PC-9 (cell line): ENCODE measurements at regions of chr10 and their contacts with region 1.

Region 1: GRCh38 chr10:35493196-35494118 is 111.7 kb upstream of the GJD4 start:
- DNase-seq: peak; percentile 45 to 49
- H3K4me3 ChIP-seq: no peak overlapping the region
- H3K27ac ChIP-seq: no peak overlapping the region
- H3K4me1 ChIP-seq: peaks cover 29% of the 10 kb centered on the region
- H3K27me3 ChIP-seq: no peaks in the 10 kb centered on the region
- CTCF ChIP-seq: no peak

Region 2: GRCh38 chr10:35059481-35059880 is 434.0 kb before region 1 on chr10:
- CTCF ChIA-PET with region 1: no interaction called
- POLR2A ChIA-PET with region 1: no interaction called
- intact Hi-C with region 1: no loop called
- DNase-seq: no peak
- H3K4me3 ChIP-seq: no peak overlapping the region
- H3K27ac ChIP-seq: no peak overlapping the region
- H3K4me1 ChIP-seq: peaks cover 18% of the 10 kb centered on the region
- H3K27me3 ChIP-seq: no peaks in the 10 kb centered on the region
- CTCF ChIP-seq: no peak

Region 3: DNA sequence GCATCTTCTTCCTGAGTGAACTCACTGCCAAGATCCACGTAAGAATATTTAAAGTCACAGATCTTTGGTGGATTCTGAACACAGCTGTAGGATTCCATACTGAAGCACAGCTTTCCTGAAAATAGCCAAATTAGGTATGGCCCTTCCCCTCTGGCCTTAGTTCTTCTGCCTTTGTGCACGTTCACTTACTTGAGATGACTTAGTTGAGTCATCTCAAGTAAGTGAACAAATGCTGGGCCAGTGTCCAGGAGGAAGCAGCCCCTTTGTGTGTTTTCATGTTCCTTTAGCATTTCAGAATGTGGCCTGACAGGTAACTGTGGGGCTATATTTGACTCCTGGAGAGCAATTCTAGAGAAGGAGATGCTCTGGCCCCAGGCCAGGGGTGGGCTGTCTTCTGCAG is 105.7 kb before region 1 on chr10:
- CTCF ChIA-PET with region 1: interaction called, 12 read pairs
- POLR2A ChIA-PET with region 1: no interaction called
- intact Hi-C with region 1: no loop called
- DNase-seq: peak; percentile 59 to 62
- H3K4me3 ChIP-seq: no peak overlapping the region
- H3K27ac ChIP-seq: no peak overlapping the region
- H3K4me1 ChIP-seq: peaks cover 4% of the 10 kb centered on the region; the same call in 1 of the 2 replicates
- H3K27me3 ChIP-seq: no peaks in the 10 kb centered on the region
- CTCF ChIP-seq: no peak

Region 4: DNA sequence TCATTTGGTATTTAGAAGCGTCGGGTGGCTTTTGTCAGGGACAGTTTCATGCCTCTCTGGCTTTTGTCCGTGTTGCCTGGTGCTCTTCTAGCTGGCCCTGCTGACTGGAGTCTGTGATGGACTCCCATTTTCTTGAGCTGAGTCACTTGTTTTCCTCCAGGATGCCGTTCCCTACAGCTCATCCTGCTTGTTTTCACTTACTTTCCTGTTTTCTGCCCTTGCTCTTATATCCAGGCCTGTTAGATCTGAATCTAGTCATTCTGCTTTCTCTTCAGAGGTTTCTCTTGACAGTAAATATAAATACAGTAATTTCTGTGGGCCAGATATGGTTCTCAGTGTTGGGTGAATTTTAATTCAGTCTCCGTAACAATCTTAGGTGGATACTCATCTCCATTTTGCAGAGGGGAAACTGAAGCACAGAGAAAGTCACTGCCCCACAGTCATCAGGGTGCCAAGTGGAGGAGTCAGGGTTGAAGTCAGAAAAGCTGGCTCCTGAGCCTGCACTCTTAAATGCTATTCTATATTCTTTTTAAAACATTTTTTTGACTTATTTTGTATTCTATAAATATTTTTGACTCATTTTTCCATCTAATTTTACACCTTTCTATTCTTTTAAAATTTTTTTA is 71.8 kb before region 1 on chr10:
- CTCF ChIA-PET with region 1: no interaction called
- POLR2A ChIA-PET with region 1: interaction called, 7 read pairs
- intact Hi-C with region 1: loop called (anchors 2 kb)
- DNase-seq: peak; percentile 53 to 78
- H3K4me3 ChIP-seq: no peak overlapping the region; the same call in 1 of the 2 replicates
- H3K27ac ChIP-seq: peak overlapping the region; percentile 80
- H3K4me1 ChIP-seq: peaks cover 46% of the 10 kb centered on the region
- H3K27me3 ChIP-seq: no peaks in the 10 kb centered on the region
- CTCF ChIP-seq: no peak

Region 5: DNA sequence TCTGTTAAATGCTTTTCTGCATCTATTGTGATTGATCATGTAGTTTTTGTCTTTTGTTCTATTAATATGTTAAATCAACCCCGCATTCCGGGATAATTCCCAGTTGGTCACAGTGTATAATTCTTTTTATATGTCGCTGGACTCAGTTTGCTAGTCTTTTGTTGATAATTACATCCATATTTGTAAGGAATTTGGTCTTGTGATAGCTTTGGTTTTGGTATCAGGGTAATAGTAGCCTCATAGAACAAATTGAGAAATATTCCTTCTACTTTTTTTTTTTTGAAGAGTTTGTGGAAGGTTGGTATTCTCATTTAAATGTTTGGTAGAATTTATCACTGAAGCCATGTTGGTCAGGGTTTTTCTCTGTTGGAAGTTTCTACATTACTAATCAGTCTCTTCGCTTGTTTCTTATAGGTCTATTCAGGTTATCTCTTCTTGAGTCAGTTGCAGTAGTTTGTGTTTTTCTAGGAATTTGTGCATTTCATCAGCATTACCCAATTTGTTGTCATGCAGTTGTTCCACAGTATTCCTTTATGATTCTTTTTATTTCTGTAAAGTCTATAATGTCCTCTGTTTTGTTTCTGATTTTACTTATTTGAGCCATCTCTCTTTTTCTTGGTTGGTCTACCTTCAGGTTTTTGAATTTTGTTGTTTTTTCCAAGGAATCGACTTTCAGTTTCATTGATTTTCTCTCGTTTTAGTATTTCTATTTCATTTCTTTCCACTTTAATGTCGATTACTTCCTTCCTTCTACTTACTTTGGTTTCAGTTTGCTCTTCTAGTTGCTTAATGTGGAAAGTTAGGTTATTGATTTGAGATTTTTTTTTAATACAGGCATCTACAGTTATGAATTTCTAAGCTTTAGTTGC is 47.1 kb after region 1 on chr10:
- CTCF ChIA-PET with region 1: no interaction called
- POLR2A ChIA-PET with region 1: no interaction called
- intact Hi-C with region 1: no loop called
- DNase-seq: no peak
- H3K4me3 ChIP-seq: no peak overlapping the region
- H3K27ac ChIP-seq: no peak overlapping the region
- H3K4me1 ChIP-seq: no peaks in the 10 kb centered on the region
- H3K27me3 ChIP-seq: no peaks in the 10 kb centered on the region
- CTCF ChIP-seq: no peak

Region 6: DNA sequence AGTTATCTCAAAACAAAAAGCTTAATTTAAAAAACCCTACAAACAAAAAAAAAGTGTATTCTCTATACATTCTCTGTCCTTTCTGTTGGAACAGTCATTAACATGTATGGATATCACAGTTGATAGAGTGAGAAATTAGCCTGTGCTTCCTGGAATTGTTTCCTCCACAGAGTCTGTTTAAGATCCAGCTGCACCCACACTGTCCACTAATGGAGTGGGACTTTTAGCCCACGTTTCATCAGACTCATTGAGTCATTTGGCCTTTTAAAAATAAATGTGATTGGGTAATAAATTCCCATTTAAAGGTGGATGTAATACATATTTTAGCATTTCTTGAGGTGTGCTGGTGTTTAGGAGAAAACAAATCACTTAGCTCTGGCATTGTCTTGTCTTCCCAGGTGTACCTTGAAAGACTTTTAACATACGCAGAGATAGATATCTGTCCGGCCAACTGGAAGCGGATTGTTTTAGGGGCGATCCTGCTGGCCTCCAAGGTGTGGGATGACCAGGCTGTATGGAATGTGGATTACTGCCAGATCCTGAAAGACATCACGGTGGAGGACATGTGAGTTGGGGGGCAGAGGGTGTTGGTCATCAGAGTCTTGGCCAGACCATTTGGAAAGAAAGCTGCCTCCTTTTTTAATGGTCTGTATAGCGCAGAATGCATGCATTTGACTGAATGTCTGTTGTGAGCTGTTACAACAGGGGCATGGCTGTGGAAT is 59.3 kb after region 1 on chr10:
- CTCF ChIA-PET with region 1: no interaction called
- POLR2A ChIA-PET with region 1: no interaction called
- intact Hi-C with region 1: loop called (anchors 2 kb)
- DNase-seq: peak; percentile 35 to 74
- H3K4me3 ChIP-seq: no peak overlapping the region
- H3K27ac ChIP-seq: no peak overlapping the region
- H3K4me1 ChIP-seq: peaks cover 7% of the 10 kb centered on the region
- H3K27me3 ChIP-seq: no peaks in the 10 kb centered on the region
- CTCF ChIP-seq: no peak